Lower lobe of right lung (tissue), 2 donors: ENCODE measurements at regions of chr10 and their contacts with region 1.

Region 1: GRCh38 chr10:120948889-120949608 is 97.9 kb downstream of the WDR11 start:
- DNase-seq: peak; percentile 63
- ATAC-seq: peak; percentile 76 to 85
- H3K4me3 ChIP-seq: peak overlapping the region; percentile 39
- H3K27ac ChIP-seq: no peak overlapping the region
- H3K4me1 ChIP-seq: peaks cover 13% of the 10 kb centered on the region
- H3K27me3 ChIP-seq: peaks cover 28% of the 10 kb centered on the region
- CTCF ChIP-seq: peak; percentile 84

Region 2: DNA sequence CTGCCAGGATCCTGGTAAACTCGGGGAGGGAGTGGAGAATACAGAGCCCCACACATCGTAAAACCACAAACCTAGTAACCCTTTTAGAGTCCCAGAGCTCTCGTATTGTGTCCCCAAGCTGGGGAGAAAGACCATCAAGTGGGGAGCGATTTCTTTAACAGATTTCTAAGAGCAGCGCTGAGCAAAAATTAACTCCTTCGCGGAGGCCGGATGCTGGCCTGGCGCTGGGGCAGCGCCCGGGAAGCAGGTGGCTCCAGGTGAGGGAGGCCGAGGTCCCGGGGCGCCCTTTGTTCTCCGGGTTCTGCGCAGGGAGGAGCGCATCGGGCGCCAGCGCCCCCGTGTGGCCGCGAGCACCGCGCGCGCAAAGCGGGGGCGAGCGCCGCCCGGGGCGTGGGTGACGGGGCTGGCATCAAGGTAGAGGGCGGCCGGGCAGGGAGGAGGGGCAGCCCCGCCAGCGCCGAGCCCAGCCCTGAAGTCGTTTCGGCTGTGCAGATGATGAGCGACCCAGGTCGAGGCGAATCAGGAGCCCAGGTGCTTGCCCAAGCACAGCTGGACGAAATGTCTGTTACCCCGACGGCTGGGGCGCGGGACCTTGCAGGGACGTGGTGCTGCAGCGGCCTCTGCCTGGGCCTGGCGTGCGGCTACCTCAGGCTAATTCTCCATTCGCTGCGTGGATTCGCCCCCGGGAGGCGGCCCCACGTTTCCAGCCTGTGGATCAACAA is 659.6 kb after region 1 on chr10:
- intact Hi-C with region 1: loop called (anchors 5 kb)
- DNase-seq: peak; percentile 66
- ATAC-seq: peak; percentile 95
- H3K4me3 ChIP-seq: peak overlapping the region; percentile 43
- H3K27ac ChIP-seq: no peak overlapping the region
- H3K4me1 ChIP-seq: no peaks in the 10 kb centered on the region
- H3K27me3 ChIP-seq: peaks cover 14% of the 10 kb centered on the region
- CTCF ChIP-seq: peak; percentile 90